Sigmoid colon (tissue), 7 donors: ENCODE measurements at regions of chr12 and their contacts with region 1.

Region 1: DNA sequence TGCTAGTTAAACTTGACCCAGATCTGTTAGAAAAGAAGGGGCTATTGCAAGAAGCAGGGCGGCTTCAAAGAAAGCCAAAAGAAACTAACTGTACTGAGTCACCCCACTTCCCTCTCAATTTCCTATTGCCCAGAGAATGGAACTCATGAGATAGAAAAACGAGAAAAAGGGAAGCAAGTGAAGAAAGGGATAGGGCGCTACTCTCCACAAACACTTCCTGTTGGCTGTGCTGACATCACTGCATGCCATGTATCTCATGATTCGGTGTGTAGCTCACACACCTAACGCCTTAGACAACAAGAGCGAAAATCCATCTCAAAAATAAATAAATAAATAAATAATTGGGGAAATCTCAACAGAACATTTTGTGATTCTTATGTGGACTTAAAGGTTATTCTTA is 13.0 kb upstream of the P2RX4 start:
- DNase-seq: no peak
- H3K4me3 ChIP-seq: no peak overlapping the region
- H3K27ac ChIP-seq: no peak overlapping the region
- H3K4me1 ChIP-seq: no peaks in the 10 kb centered on the region
- H3K27me3 ChIP-seq: no peaks in the 10 kb centered on the region
- CTCF ChIP-seq: no peak
- EP300 ChIP-seq: peak in 1 of 4 donors; percentile 12
- POLR2A ChIP-seq: no peak

Region 2: GRCh38 chr12:121138281-121138680 is 58.6 kb before region 1 on chr12:
- intact Hi-C with region 1: loop called (anchors 5 kb)
- DNase-seq: no peak
- H3K4me3 ChIP-seq: no peak overlapping the region
- H3K27ac ChIP-seq: no peak overlapping the region
- H3K4me1 ChIP-seq: peaks cover 0 to 16% (median 5%) of the 10 kb centered on the region in 4 donors
- H3K27me3 ChIP-seq: no peaks in the 10 kb centered on the region
- CTCF ChIP-seq: no peak
- EP300 ChIP-seq: no peak
- POLR2A ChIP-seq: no peak